Heart right ventricle (tissue), 16 donors: ENCODE measurements at regions of chr10 and their contacts with region 1.

Region 1: DNA sequence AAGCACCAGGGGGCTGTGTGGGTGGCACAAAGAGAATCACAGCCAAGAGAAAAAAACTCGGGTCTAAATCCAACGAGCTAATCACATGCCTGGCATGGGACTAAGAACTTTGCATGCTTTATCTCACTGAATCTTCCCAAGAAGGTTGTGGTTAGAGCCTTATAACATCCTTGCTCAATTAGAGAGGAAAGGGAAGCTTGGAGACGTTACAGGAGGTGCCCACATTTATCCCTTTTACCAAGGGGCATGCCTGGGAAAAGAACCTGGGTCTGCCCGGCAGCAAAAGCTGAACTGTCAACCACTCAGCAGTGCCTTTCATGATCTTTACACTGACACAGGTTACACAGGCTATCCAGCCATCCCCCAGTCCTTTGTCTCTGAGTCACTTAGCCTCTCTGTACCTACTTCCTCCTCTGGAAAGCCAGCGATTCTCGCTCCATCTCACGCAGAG is 190.1 kb downstream of the PRPF18 start:
- DNase-seq: no peak
- ATAC-seq: no peak
- H3K4me3 ChIP-seq: no peak overlapping the region
- H3K27ac ChIP-seq: no peak overlapping the region
- H3K4me1 ChIP-seq: peaks cover 3 to 32% (median 12%) of the 10 kb centered on the region in 9 donors
- H3K27me3 ChIP-seq: no peaks in the 10 kb centered on the region
- CTCF ChIP-seq: no peak

Region 2: GRCh38 chr10:13511409-13511808 is 265.5 kb before region 1 on chr10:
- intact Hi-C with region 1: no loop called
- DNase-seq: no peak
- ATAC-seq: no peak
- H3K4me3 ChIP-seq: no peak overlapping the region
- H3K27ac ChIP-seq: no peak overlapping the region
- H3K4me1 ChIP-seq: no peaks in the 10 kb centered on the region
- H3K27me3 ChIP-seq: no peaks in the 10 kb centered on the region
- CTCF ChIP-seq: no peak

Region 3: GRCh38 chr10:13613519-13613918 is 163.4 kb before region 1 on chr10:
- intact Hi-C with region 1: loop called in 7 of 10 experiments (anchors 1 to 10 kb)
- DNase-seq: no peak
- ATAC-seq: peak in 7 of 8 donors; percentile 42 to 80 (median 65)
- H3K4me3 ChIP-seq: no peak overlapping the region
- H3K27ac ChIP-seq: no peak overlapping the region
- H3K4me1 ChIP-seq: peaks cover 0 to 15% (median 0%) of the 10 kb centered on the region in 9 donors
- H3K27me3 ChIP-seq: no peaks in the 10 kb centered on the region
- CTCF ChIP-seq: peak; percentile 25 to 65 (median 47)

Region 4: GRCh38 chr10:13659897-13660550 is 116.9 kb before region 1 on chr10:
- intact Hi-C with region 1: loop called (anchors 1 to 5 kb)
- DNase-seq: peak; percentile 73 to 78
- ATAC-seq: peak; percentile 60 to 78 (median 68)
- H3K4me3 ChIP-seq: peak overlapping the region in 1 of 10 donors; percentile 5
- H3K27ac ChIP-seq: peak overlapping the region in 8 of 10 donors; percentile 53 to 79 (median 68)
- H3K4me1 ChIP-seq: peaks cover 8 to 38% (median 22%) of the 10 kb centered on the region in 9 donors
- H3K27me3 ChIP-seq: no peaks in the 10 kb centered on the region
- CTCF ChIP-seq: peak; percentile 88 to 97 (median 94)

Region 5: DNA sequence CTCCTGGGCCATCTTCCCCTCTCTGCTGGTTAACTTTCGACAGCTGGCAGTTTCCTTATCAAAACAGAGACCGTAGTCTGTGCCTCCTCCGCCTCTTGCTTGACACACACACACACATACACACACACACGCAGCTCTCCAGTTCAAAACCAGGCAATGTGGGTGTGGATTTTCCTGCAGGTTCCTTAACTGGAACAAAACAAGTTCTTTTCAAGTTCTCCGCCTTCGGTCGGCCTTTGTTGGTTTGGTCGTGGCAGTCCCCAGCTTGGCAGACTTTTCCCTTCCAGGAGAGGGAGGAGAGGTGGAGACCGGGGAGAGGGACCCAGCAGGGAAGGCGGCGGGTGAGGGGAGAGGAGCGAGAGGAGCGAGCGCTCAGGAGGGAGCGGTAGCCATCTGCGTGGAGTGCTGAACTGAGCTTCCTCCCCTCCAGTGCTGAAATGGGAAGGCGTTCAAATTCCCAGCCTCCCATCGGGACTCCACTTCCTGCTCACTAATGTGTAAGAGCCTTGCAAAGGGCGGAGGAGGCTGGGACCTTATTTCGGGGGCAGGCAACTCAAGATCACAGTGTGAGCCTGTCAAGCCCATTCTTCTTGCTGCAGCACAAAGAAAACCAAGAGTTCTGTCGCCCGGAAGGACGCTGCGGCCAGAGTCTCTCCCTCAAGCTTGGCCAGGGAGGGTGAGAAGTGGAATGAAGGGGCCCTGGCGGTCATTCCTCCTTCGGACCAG is 69.6 kb before region 1 on chr10:
- intact Hi-C with region 1: loop called in 3 of 10 experiments (anchors 5 to 10 kb)
- DNase-seq: peak; percentile 80 to 94
- ATAC-seq: peak; percentile 86 to 93 (median 90)
- H3K4me3 ChIP-seq: peak overlapping the region; percentile 7 to 70 (median 63)
- H3K27ac ChIP-seq: peak overlapping the region; percentile 44 to 91 (median 84)
- H3K4me1 ChIP-seq: peaks cover 11 to 90% (median 76%) of the 10 kb centered on the region in 9 donors
- H3K27me3 ChIP-seq: no peaks in the 10 kb centered on the region
- CTCF ChIP-seq: peak in 1 of 9 donors; percentile 17

Region 6: GRCh38 chr10:13712837-13713581 is 63.9 kb before region 1 on chr10:
- intact Hi-C with region 1: loop called in 6 of 10 experiments (anchors 5 to 10 kb)
- DNase-seq: peak; percentile 67 to 80
- ATAC-seq: peak; percentile 67 to 90 (median 74)
- H3K4me3 ChIP-seq: no peak overlapping the region
- H3K27ac ChIP-seq: peak overlapping the region in 9 of 10 donors; percentile 20 to 85 (median 61)
- H3K4me1 ChIP-seq: peaks cover 9 to 71% (median 51%) of the 10 kb centered on the region in 9 donors
- H3K27me3 ChIP-seq: no peaks in the 10 kb centered on the region
- CTCF ChIP-seq: no peak

Region 7: GRCh38 chr10:13717931-13718772 is 58.7 kb before region 1 on chr10:
- intact Hi-C with region 1: loop called in 5 of 10 experiments (anchors 5 to 10 kb)
- DNase-seq: peak; percentile 76 to 80
- ATAC-seq: peak; percentile 73 to 86 (median 80)
- H3K4me3 ChIP-seq: peak overlapping the region in 9 of 10 donors; percentile 24 to 45 (median 40)
- H3K27ac ChIP-seq: peak overlapping the region; percentile 72 to 85 (median 76)
- H3K4me1 ChIP-seq: peaks cover 0 to 43% (median 31%) of the 10 kb centered on the region in 9 donors
- H3K27me3 ChIP-seq: no peaks in the 10 kb centered on the region
- CTCF ChIP-seq: no peak

Region 8: GRCh38 chr10:13724484-13724883 is 52.4 kb before region 1 on chr10:
- intact Hi-C with region 1: loop called in 5 of 10 experiments (anchors 5 to 10 kb)
- DNase-seq: peak; percentile 28 to 68
- ATAC-seq: peak; percentile 69 to 91 (median 82)
- H3K4me3 ChIP-seq: no peak overlapping the region
- H3K27ac ChIP-seq: peak overlapping the region in 6 of 10 donors; percentile 4 to 59 (median 31)
- H3K4me1 ChIP-seq: peaks cover 0 to 25% (median 14%) of the 10 kb centered on the region in 9 donors
- H3K27me3 ChIP-seq: no peaks in the 10 kb centered on the region
- CTCF ChIP-seq: no peak